Endothelial cell of umbilical vein (primary cell): ENCODE measurements at regions of chr6 and their contacts with region 1.

Region 1: DNA sequence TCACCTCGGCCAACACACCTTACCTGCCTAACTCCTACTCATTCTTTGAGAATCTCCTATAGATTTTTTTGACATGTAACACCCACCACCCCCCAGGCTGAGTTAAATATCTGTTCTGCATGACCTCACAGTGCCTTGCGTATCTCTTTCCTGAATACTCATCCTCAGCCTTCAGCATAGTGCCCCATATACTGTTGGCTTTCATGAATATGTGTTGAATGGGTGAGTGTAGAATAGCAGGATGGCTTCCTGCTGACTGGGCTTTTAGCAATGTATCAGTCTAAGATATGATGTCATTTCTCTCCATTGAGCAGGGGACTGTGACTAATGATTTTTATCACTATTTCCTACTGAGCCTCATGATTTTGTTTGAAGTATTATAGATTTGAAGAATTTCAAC is 361.6 kb upstream of the MARCKS start:
- DNase-seq: peak; percentile 91
- H3K4me3 ChIP-seq: no peak overlapping the region
- H3K27ac ChIP-seq: peak overlapping the region; percentile 100
- H3K4me1 ChIP-seq: peaks cover 33% of the 10 kb centered on the region
- H3K27me3 ChIP-seq: no peaks in the 10 kb centered on the region
- CTCF ChIP-seq: no peak
- POLR2A ChIP-seq: no peak

Region 2: DNA sequence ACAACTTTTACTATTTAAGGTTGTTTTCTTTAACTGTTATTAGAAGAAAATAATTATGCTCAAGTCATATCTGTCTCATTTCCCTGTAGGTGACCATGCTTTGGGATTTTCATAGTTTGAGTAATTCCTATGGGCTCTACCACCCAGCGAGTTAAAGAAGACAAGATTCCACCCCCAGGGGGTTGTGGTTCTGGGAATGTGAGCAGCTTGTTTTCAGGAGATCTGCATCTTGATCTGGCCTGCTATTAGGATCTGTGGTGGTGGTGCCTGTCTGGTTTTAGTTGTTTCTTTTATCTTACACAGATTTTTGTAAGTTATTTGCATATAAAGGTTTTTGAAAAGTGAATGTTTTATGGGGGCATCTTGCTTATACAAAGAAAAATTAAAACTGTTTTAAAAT is 1992.3 kb before region 1 on chr6:
- CTCF ChIA-PET with region 1: no interaction called
- POLR2A ChIA-PET with region 1: no interaction called
- dilution Hi-C with region 1: no loop called
- intact Hi-C with region 1: no loop called
- DNase-seq: no peak
- H3K4me3 ChIP-seq: no peak overlapping the region
- H3K27ac ChIP-seq: no peak overlapping the region
- H3K4me1 ChIP-seq: no peaks in the 10 kb centered on the region
- H3K27me3 ChIP-seq: no peaks in the 10 kb centered on the region
- CTCF ChIP-seq: no peak
- POLR2A ChIP-seq: no peak

Region 3: DNA sequence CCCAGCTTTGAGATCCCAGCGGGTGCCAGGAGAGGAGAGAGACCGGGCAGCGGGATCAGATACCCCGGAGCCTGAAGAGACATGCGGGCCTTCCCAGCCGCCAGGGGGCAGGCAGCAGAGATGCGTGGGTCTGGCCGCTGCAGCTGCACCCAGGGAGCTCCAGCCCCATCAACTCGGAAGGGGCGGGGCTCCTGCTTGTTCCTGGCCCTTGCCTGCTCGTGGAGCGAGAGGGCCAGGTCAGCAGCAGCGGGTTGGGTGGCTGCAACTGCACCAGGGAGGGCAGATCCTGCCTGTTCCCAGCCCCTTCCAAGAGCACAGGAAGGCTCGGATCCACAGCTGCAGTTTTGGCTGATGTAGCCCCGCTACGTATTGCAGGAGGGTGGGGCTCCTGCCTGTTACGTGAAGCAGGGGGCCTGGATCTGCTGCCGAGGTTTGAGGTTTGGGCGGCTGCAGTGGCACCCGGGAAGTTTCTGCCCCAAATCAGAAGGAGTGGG is 615.5 kb before region 1 on chr6:
- CTCF ChIA-PET with region 1: interaction called, 3 read pairs
- POLR2A ChIA-PET with region 1: no interaction called
- dilution Hi-C with region 1: no loop called
- intact Hi-C with region 1: loop called (anchors 5 kb)
- DNase-seq: no peak
- H3K4me3 ChIP-seq: no peak overlapping the region
- H3K27ac ChIP-seq: no peak overlapping the region
- H3K4me1 ChIP-seq: peaks cover 23% of the 10 kb centered on the region
- H3K27me3 ChIP-seq: no peaks in the 10 kb centered on the region
- CTCF ChIP-seq: no peak
- POLR2A ChIP-seq: no peak

Region 4: GRCh38 chr6:113182370-113183141 is 312.9 kb before region 1 on chr6:
- CTCF ChIA-PET with region 1: no interaction called
- POLR2A ChIA-PET with region 1: no interaction called
- dilution Hi-C with region 1: no loop called
- intact Hi-C with region 1: loop called (anchors 1 kb)
- DNase-seq: peak; percentile 82
- H3K4me3 ChIP-seq: peak overlapping the region in 1 of 3 experiments; percentile 38
- H3K27ac ChIP-seq: peak overlapping the region; percentile 87
- H3K4me1 ChIP-seq: peaks cover 29% of the 10 kb centered on the region
- H3K27me3 ChIP-seq: no peaks in the 10 kb centered on the region
- CTCF ChIP-seq: no peak
- POLR2A ChIP-seq: no peak

Region 5: DNA sequence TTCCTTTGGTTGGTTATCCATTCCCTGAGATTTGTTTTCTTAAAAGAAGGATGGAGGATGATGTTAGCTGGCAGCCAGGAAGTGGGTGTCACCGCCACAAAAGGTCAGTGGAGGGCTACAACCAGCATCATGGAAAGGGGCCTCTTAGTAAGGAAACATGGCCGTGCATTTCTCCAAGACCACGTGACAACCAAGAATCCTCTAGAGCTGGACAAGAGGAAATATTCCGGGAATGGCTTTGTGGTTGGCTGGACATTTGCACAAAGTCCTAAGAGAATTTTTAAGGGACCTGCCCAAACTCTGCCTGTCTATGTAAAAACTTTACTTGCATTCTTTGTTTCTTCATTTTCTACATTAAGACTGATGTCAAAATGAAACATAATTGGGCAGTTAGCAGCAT is 38.3 kb before region 1 on chr6:
- CTCF ChIA-PET with region 1: interaction called, 3 read pairs
- POLR2A ChIA-PET with region 1: no interaction called
- dilution Hi-C with region 1: no loop called
- intact Hi-C with region 1: loop called (anchors 1 kb)
- DNase-seq: peak; percentile 67
- H3K4me3 ChIP-seq: no peak overlapping the region
- H3K27ac ChIP-seq: peak overlapping the region; percentile 24
- H3K4me1 ChIP-seq: peaks cover 22% of the 10 kb centered on the region
- H3K27me3 ChIP-seq: no peaks in the 10 kb centered on the region
- CTCF ChIP-seq: no peak
- POLR2A ChIP-seq: no peak

Region 6: DNA sequence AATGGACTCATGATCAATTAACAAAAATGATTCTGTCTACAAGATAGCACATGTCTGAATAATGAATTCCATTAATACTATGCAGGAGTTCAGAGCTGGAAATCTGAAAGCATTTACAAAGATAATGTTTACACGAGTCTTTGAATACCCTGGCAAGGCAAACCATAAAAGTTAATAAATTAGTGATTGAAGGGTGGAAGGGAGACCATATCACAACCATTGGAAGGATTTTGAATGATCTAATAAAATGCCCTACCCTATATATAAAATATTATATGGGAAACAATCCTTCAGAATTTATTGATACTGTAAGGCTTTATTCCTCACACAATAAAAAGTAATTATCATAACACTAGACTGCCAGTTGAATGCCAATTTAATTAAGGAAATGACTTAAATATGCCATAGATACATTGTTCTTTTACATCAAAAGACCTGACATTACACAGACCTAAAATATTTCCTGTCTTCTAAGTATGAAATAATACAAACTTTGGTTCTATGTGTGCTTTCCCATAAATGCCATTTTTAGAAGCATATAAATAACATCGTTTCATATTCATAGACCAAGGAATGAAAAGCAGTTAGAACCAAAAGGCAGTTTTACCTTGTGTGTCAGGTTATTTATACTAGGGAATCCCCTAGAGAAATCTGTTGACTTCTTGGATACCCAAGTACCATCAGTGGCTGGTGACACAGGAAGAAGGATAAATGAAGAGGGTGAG is 112.5 kb after region 1 on chr6:
- CTCF ChIA-PET with region 1: interaction called, 3 read pairs
- POLR2A ChIA-PET with region 1: no interaction called
- dilution Hi-C with region 1: no loop called
- intact Hi-C with region 1: loop called (anchors 5 kb)
- DNase-seq: peak; percentile 70
- H3K4me3 ChIP-seq: no peak overlapping the region
- H3K27ac ChIP-seq: peak overlapping the region; percentile 53
- H3K4me1 ChIP-seq: peaks cover 17% of the 10 kb centered on the region
- H3K27me3 ChIP-seq: no peaks in the 10 kb centered on the region
- CTCF ChIP-seq: no peak
- POLR2A ChIP-seq: no peak

Region 7: DNA sequence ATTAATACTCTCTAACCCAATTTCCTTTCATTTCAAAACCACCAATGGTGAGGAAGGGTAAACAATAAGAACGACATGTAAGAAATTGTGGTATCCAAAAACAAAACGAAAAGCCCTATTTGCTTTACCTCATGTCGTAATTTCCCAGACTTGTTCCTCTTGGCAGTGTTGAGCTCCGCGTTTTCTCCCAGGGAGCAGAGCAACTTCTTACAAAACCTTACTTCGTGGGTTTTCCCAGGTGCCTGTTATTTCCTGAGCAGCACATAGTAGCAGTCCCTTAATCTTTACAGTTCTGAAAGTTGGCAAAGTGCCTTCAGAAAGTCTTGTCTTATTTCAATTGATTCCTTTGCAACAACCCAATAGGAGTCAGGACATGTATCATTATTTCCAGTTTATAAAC is 153.8 kb after region 1 on chr6:
- CTCF ChIA-PET with region 1: no interaction called
- POLR2A ChIA-PET with region 1: no interaction called
- dilution Hi-C with region 1: no loop called
- intact Hi-C with region 1: no loop called
- DNase-seq: no peak
- H3K4me3 ChIP-seq: no peak overlapping the region
- H3K27ac ChIP-seq: no peak overlapping the region
- H3K4me1 ChIP-seq: peaks cover under 1% of the 10 kb centered on the region
- H3K27me3 ChIP-seq: no peaks in the 10 kb centered on the region
- CTCF ChIP-seq: no peak
- POLR2A ChIP-seq: no peak

Region 8: GRCh38 chr6:113723182-113723581 is 227.7 kb after region 1 on chr6:
- CTCF ChIA-PET with region 1: no interaction called
- POLR2A ChIA-PET with region 1: no interaction called
- dilution Hi-C with region 1: no loop called
- intact Hi-C with region 1: loop called (anchors 1 kb)
- DNase-seq: peak; percentile 85
- H3K4me3 ChIP-seq: peak overlapping the region in 1 of 3 experiments; percentile 30
- H3K27ac ChIP-seq: peak overlapping the region; percentile 45
- H3K4me1 ChIP-seq: peaks cover 9% of the 10 kb centered on the region
- H3K27me3 ChIP-seq: no peaks in the 10 kb centered on the region
- CTCF ChIP-seq: no peak
- POLR2A ChIP-seq: no peak